ENCODE measurements at regions of chr5 and their contacts with region 1.

Region 1: DNA sequence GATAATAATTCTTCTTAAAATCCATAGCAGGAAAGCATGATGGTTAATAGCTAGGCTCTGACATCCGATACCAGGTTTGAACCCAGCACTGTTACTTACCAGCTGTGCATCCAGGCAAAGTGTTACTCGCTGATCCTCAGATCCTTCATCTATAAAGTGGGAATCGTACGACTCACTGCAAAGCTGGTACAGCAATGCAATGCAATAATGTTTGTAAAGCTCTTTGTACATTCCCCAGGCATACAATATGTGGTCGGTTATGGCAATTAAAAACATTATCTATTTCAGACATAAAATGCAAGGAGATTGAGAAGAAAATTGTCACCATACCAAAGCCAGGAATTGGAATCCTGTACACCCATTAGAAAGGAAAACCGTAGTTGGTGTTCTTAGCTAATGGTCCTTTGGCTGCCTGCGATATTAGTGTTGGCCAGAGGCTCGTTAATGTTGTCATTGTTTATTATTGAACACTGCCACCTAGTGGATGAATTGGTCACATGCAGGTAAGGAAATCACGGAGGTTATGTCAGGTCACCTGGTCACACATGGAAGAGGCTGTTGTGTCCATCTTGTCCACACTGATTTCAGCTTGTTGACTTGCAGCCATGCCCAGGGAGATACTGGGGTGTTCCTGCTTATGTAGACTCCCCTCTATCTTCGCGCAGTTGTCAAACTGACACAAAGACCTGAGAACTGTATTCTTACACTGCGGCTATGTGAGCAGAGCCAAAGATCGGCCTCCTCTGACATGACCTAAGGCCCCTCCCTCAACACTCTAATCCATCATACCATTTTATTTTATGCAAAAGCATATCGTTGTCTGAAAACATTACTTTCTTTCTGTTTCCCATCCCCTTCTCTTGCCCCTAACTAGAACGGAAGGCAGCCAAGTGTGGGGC is 87.5 kb upstream of the PPP2R2B start:
- DNase-seq: peak; percentile 74
- ATAC-seq: peak; percentile 98
- H3K4me3 ChIP-seq: no peak overlapping the region
- H3K27ac ChIP-seq: no peak overlapping the region
- H3K4me1 ChIP-seq: peaks cover 0 to 8% of the 10 kb centered on the region in 2 experiments; a peak in 1 of 4 replicates
- H3K27me3 ChIP-seq: no peaks in the 10 kb centered on the region
- CTCF ChIP-seq: peak; percentile 68 to 91 (median 81)
- POLR2A ChIP-seq: no peak
- RAD21 ChIP-seq: peak; percentile 95

Region 2: GRCh38 chr5:146466521-146467349 is 499.3 kb before region 1 on chr5:
- CTCF ChIA-PET with region 1: no interaction called
- POLR2A ChIA-PET with region 1: no interaction called
- RAD21 ChIA-PET with region 1: no interaction called
- intact Hi-C with region 1: loop called (anchors 10 kb)
- DNase-seq: no peak
- ATAC-seq: peak; percentile 55; the same call in 1 of the 2 replicates
- H3K4me3 ChIP-seq: no peak overlapping the region
- H3K27ac ChIP-seq: no peak overlapping the region
- H3K4me1 ChIP-seq: no peaks in the 10 kb centered on the region
- H3K27me3 ChIP-seq: no peaks in the 10 kb centered on the region
- CTCF ChIP-seq: peak in 2 of 3 experiments; percentile 46 to 52; a peak in 4 of 6 replicates
- POLR2A ChIP-seq: no peak
- RAD21 ChIP-seq: 0 out of 2 replicates have a peak, but pooled peaks have one; percentile 3

Region 3: GRCh38 chr5:146533260-146533857 is 432.7 kb before region 1 on chr5:
- CTCF ChIA-PET with region 1: interaction called, 78 read pairs
- POLR2A ChIA-PET with region 1: no interaction called
- RAD21 ChIA-PET with region 1: interaction called, 8 to 9 read pairs
- intact Hi-C with region 1: loop called (anchors 1 kb)
- DNase-seq: peak; percentile 73
- ATAC-seq: peak; percentile 97
- H3K4me3 ChIP-seq: no peak overlapping the region
- H3K27ac ChIP-seq: no peak overlapping the region
- H3K4me1 ChIP-seq: peaks cover 0 to 3% of the 10 kb centered on the region in 2 experiments; a peak in 2 of 4 replicates
- H3K27me3 ChIP-seq: no peaks in the 10 kb centered on the region
- CTCF ChIP-seq: peak; percentile 70 to 88 (median 77)
- POLR2A ChIP-seq: no peak
- RAD21 ChIP-seq: peak; percentile 91

Region 4: DNA sequence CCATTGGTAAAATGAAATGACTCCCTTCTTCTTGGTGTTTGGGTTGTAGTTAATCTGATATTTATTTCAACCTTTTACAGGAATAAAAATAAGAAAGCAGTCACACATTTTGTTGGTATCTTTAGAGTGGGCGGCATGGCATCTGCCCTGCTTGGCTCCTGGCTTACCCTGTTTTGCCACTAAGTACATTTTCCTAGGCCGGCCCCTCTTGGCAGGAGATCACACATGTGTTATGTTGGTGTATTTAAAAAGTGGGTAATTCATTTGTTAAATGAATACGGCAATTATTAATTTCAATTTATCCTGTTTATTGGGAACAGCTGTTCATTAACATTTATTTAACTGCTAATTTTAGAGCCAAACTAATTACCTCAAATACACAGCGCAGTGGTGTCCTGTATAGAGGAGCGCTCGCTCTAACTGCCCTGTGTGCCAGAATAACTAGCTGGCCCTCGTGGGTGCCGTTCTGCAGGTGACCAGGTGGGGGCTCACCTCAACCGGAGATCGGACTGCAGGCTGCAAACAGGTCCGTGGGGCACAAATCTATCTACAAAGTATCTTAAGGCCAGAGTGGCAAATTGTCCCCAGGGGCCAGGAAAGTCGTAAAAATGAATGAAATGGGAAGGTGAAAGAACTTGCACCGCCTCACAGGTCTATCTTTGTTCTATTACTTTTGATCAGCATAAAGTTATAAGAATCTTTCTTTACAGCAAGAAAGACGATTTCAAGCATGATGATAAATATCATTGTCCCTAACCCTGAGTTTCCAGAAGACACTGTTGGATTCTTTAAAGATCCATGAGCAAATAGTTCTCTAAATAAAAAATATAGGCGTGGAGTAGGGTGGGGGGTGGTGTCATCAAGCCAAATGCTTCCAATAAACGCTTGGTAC is 423.8 kb before region 1 on chr5:
- CTCF ChIA-PET with region 1: interaction called, 81 read pairs
- POLR2A ChIA-PET with region 1: interaction called, 10 read pairs
- RAD21 ChIA-PET with region 1: interaction called, 8 to 11 read pairs
- intact Hi-C with region 1: loop called (anchors 1 kb)
- DNase-seq: peak; percentile 49
- ATAC-seq: peak; percentile 99
- H3K4me3 ChIP-seq: no peak overlapping the region
- H3K27ac ChIP-seq: no peak overlapping the region
- H3K4me1 ChIP-seq: no peaks in the 10 kb centered on the region
- H3K27me3 ChIP-seq: no peaks in the 10 kb centered on the region
- CTCF ChIP-seq: peak; percentile 89 to 97 (median 90)
- POLR2A ChIP-seq: no peak
- RAD21 ChIP-seq: peak; percentile 96

Region 5: DNA sequence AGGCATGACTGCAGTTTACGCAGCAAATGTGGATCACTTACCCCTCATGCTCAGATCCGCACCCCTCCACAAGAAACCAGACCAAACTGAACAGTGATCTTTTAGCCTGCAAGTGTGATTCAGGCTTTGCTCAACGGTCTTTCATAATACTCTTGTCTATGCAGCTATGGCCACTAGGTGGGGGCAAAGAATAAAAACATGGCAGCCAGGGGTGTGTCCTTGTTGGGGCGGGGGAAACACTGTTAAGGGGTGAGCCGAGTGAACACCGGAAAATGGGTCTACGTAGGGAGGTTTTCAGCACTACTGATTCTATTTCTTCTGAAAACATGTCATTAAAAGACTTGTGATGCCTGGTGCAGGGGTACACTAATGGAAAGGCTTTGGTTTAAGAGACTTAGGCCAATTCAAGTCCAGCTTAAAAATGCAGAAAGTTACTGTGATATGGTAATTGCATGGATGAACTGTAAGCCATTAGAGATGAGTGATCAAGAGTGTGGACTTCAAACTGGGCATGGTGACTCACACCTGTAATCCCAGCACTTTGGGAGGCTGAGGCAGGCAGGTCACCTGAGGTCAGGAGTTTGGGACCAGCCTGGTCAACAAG is 400.1 kb before region 1 on chr5:
- CTCF ChIA-PET with region 1: interaction called, 20 read pairs
- POLR2A ChIA-PET with region 1: no interaction called
- RAD21 ChIA-PET with region 1: interaction called, 3 to 5 read pairs
- intact Hi-C with region 1: no loop called
- DNase-seq: peak; percentile 63
- ATAC-seq: peak; percentile 99
- H3K4me3 ChIP-seq: no peak overlapping the region
- H3K27ac ChIP-seq: no peak overlapping the region
- H3K4me1 ChIP-seq: peaks cover 0 to 17% of the 10 kb centered on the region in 2 experiments; a peak in 1 of 4 replicates
- H3K27me3 ChIP-seq: no peaks in the 10 kb centered on the region
- CTCF ChIP-seq: peak; percentile 68 to 80 (median 77)
- POLR2A ChIP-seq: no peak
- RAD21 ChIP-seq: peak; percentile 79

Region 6: DNA sequence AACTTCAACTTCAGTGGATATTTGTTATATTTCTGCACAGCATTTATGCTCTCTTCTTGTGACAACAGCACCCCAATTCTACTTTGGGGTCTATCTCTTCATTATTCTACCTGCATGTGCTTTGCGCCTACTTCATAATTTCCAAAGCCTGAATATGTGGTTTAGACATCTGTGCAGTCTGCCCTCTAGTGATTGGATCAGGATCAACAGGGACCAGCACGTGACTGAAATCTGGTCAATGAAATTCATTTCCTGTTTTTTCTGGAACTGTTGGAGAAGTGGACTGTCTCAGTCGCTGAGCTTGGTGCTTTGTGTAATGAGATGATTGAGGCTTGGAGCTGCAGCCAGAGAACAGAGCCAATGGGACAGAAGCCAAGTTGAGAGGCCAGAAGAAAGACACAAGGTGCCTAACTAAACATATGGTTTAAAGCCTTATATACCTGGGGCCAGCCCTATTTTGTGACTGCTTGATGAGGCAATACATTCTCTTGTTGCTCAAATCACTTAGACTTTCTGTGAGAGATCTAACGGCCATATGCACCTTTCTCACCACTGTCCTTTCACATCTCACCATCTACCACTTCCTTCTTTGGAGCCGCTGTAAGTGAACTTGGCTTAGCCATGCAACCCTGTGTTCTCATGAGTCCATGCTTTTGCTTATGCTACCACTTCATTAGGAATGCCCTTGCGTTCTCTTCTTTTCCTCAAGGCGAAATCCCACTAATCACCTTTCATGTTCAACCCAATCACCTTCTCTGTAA is 18.6 kb before region 1 on chr5:
- CTCF ChIA-PET with region 1: no interaction called
- POLR2A ChIA-PET with region 1: no interaction called
- RAD21 ChIA-PET with region 1: no interaction called
- intact Hi-C with region 1: no loop called
- DNase-seq: peak; percentile 16
- ATAC-seq: peak; percentile 77
- H3K4me3 ChIP-seq: no peak overlapping the region
- H3K27ac ChIP-seq: no peak overlapping the region
- H3K4me1 ChIP-seq: no peaks in the 10 kb centered on the region
- H3K27me3 ChIP-seq: no peaks in the 10 kb centered on the region
- CTCF ChIP-seq: peak; percentile 27 to 65 (median 45); a peak in 4 of 6 replicates
- POLR2A ChIP-seq: no peak
- RAD21 ChIP-seq: peak; percentile 50

Region 7: GRCh38 chr5:147188200-147189108 is 222.4 kb after region 1 on chr5:
- CTCF ChIA-PET with region 1: interaction called, 32 read pairs
- POLR2A ChIA-PET with region 1: no interaction called
- RAD21 ChIA-PET with region 1: interaction called, 6 read pairs
- intact Hi-C with region 1: loop called (anchors 2 kb)
- DNase-seq: peak; percentile 42
- ATAC-seq: peak; percentile 93
- H3K4me3 ChIP-seq: no peak overlapping the region
- H3K27ac ChIP-seq: no peak overlapping the region
- H3K4me1 ChIP-seq: no peaks in the 10 kb centered on the region
- H3K27me3 ChIP-seq: peaks cover 3% of the 10 kb centered on the region; the same call in 1 of the 2 replicates
- CTCF ChIP-seq: peak; percentile 65 to 88 (median 71)
- POLR2A ChIP-seq: no peak
- RAD21 ChIP-seq: peak; percentile 84

Measured in HCT116 (cell line).